Heart right ventricle (tissue), 16 donors: ENCODE measurements at regions of chr16 and their contacts with region 1.

Region 1: DNA sequence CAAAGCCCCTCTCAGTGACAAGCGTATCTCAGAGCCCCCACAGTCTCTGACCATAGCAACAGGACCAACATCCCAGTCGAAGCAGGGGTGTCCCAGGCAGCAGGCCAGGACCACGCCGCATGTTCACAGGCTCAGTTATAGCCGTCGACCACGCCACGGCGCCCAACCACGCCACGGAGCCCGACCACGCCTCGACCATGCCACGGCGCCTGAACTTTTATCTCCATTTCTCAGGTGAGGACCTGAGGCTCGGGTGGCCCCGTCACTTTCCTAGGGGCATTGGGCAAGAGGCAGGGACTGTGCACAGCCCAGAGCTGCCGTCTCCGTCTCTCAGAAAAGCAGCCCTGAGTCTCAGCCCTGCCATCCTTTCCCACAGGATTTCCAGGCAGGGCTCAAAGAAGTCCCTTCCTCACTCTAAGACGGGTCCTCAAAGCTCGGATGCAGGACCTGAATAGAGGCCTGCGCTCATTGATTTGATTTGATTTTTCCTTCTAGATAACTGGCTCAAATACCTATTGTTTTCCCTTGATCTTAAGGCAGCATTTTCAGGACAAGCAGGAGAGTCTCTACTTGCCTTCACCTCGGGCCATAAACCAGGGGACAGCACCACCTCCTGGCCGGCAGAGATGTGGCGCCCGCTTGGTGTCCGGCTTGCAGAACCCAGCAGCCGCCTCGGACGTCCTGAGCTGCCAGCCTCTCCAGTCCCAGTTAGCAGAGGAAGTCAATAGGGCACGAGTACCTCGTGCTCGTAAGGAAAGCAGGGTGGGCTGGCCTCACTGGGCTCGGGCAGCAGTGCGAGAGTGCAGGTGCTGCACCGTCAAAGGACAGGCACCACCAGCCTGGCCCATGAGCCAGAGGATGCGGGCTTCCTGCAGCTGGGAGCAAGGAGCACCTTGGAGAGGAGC is 38.7 kb downstream of the C16orf95 start:
- DNase-seq: peak; percentile 72 to 76
- ATAC-seq: peak; percentile 86 to 96 (median 94)
- H3K4me3 ChIP-seq: no peak overlapping the region
- H3K27ac ChIP-seq: no peak overlapping the region
- H3K4me1 ChIP-seq: peaks cover 0 to 6% (median 0%) of the 10 kb centered on the region in 9 donors
- H3K27me3 ChIP-seq: peaks cover 0 to 14% (median 0%) of the 10 kb centered on the region in 7 donors
- CTCF ChIP-seq: peak; percentile 73 to 95 (median 87)

Region 2: DNA sequence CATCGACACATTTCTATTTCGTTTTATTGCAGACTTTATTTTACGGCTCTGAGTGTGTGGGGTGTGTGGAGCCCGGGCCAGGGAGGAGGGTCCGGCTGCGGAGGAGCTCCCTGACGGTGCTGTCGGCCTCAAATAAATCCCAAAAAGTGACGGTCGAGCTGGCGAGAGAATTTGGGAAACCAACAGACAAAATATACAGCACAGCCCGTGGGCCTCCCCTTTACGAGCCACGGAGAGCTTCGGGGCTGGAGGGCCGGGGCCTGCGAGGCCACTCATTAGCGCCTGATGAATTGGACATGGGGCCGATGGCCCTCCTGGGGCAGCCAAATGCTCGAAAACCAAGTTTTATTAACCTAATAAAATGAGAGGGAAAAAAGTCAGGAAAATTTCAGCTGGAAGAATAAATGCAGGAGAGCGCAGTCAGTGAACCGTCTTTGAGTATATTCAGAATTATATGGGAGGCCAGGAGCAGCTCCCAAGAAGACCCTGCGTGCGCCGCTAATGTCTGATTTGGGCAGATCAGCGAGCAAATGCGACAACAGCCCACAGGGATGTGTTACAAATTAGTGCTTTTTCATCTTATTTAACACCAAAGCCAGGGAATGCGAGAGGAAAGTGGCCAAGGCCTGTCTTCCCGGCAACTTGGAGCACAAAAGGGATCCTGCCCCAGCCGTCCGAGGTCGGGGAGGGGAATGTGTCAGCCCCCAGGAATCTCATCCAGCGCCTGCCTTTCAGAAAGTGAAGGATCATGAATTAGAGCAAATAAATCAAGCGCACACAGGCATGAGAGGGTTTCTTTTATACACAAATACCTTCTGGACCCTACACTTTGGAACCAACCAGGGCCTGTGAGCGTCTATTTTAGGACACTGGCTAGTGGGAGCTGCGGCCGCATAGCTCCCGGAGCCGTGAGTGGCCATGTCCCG is 210.3 kb before region 1 on chr16:
- intact Hi-C with region 1: loop called in 7 of 10 experiments (anchors 5 to 10 kb)
- DNase-seq: no peak
- ATAC-seq: no peak
- H3K4me3 ChIP-seq: no peak overlapping the region
- H3K27ac ChIP-seq: no peak overlapping the region
- H3K4me1 ChIP-seq: no peaks in the 10 kb centered on the region
- H3K27me3 ChIP-seq: peaks cover 0 to 70% (median 36%) of the 10 kb centered on the region in 7 donors
- CTCF ChIP-seq: no peak

Region 3: DNA sequence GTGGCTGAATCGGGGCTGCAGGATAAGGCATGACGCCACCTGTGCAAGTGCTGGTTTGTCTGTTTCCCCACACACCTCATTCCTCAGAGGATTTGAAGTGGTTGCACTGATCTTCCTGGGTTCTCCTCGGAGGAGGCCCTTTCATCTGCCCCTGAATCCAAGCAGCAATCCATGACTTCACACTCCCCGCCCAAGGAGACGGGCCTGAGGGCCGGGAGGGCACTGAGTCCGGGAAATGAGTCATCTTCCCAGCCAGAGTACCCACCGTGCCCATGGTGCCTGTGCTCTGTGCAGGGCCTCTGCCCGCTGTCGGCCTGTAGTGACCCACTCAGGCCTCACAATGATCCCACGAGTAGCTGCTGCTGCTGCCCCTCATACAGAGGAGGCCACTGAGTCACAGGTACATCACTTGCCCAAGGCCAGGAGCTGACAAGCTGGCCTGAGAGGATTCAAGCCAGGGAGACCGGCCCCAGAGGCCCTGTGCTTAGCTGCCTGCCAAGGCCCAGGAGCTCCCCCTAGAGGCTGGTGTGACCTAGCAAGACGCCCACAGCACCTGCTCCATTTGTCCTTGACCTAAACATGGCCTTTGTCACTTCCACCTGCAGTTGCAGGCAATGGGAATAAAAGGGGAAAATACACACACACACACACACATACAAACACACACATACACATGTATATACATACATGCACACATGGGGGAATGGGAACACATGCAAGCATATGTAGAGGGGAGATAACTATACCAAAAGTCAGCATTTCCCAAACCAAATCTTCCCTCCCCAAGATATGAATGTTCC is 201.3 kb before region 1 on chr16:
- intact Hi-C with region 1: loop called in 1 of 10 experiments (anchors 10 kb)
- DNase-seq: peak; percentile 29 to 40
- ATAC-seq: no peak
- H3K4me3 ChIP-seq: no peak overlapping the region
- H3K27ac ChIP-seq: no peak overlapping the region
- H3K4me1 ChIP-seq: no peaks in the 10 kb centered on the region
- H3K27me3 ChIP-seq: peaks cover 0 to 22% (median 2%) of the 10 kb centered on the region in 7 donors
- CTCF ChIP-seq: peak in 8 of 9 donors; percentile 19 to 61 (median 52)

Region 4: GRCh38 chr16:87203060-87203656 is 75.3 kb before region 1 on chr16:
- intact Hi-C with region 1: loop called in 3 of 10 experiments (anchors 5 to 10 kb)
- DNase-seq: peak in 1 of 2 donors; percentile 67
- ATAC-seq: peak in 6 of 8 donors; percentile 23 to 52 (median 50)
- H3K4me3 ChIP-seq: no peak overlapping the region
- H3K27ac ChIP-seq: no peak overlapping the region
- H3K4me1 ChIP-seq: peaks cover 0 to 11% (median 0%) of the 10 kb centered on the region in 9 donors
- H3K27me3 ChIP-seq: peaks cover 0 to 13% (median 0%) of the 10 kb centered on the region in 7 donors
- CTCF ChIP-seq: peak; percentile 24 to 84 (median 69)